ENCODE measurements at regions of chr17 and their contacts with region 1.

Region 1: GRCh38 chr17:62134397-62134796 is 69.3 kb upstream of the MED13 start:
- DNase-seq: no peak
- ATAC-seq: no peak
- H3K4me3 ChIP-seq: no peak overlapping the region
- H3K4me3 Mint-ChIP-seq: no peak overlapping the region
- H3K27ac ChIP-seq: no peak overlapping the region
- H3K27ac Mint-ChIP-seq: no peak overlapping the region
- H3K4me1 ChIP-seq: peaks cover 0 to 9% of the 10 kb centered on the region in 2 experiments
- H3K4me1 Mint-ChIP-seq: peaks cover 0 to 4% (median 2%) of the 10 kb centered on the region in 3 donors
- H3K27me3 ChIP-seq: peaks cover 0 to 24% of the 10 kb centered on the region in 2 experiments
- H3K27me3 Mint-ChIP-seq: peaks cover 14 to 27% of the 10 kb centered on the region in 2 donors

Region 2: DNA sequence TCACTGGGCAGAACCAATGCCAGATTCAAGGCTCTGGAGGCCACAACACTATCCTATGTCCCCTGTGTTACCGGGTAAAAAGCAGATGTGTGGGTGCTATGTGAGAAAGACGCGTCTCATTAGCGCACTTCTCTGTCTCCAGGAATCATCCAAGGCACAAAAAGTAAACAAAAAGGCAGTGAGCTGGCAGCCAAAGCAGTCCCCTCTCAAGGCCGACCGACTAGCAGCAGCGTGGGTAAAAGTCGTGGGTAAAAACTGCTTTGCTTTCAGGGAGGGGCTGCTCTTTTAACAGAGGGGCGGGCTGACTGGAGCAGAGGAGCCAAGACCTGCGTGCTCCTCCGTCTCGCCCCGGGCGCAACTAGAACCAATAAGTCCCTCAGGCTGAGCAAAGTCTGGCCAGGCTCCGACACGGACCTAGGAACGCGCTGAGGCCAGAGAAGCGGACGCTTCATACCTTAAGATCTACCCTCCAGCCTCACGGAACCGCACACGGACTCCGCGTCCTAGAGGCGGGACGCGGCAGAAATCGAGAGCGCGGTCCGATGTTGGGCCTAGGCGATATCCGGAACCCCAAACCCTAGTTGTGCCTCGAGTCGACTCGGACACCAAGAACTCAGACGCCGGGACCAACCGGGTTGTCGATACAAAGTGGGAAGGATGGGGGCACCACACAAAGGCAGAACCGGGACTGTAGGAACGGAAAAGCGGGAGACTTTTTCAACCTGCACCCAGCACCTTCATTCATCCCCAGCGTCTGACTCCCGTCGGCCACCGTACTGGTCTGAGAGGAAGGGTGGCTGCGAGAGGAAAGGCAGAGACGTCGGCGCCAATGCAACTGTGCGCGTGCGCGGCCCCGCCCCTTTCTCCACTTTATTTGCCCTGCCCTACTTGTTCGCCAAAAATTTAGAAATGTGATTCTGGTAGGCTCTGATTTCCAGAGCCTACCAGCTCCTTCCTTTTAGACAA is 206.9 kb before region 1 on chr17 and contains the start of gene INTS2:
- CTCF ChIA-PET with region 1: no interaction called
- POLR2A ChIA-PET with region 1: no interaction called
- DNase-seq: peak; percentile 90 to 97 (median 95)
- ATAC-seq: peak; percentile 89 to 92 (median 90)
- H3K4me3 ChIP-seq: peak within 1 kb of the TSS; percentile 80 to 81
- H3K4me3 Mint-ChIP-seq: peak within 1 kb of the TSS; percentile 87 to 92 (median 90)
- H3K27ac ChIP-seq: peak within 1 kb of the TSS; percentile 80
- H3K27ac Mint-ChIP-seq: peak within 1 kb of the TSS; percentile 95
- H3K4me1 ChIP-seq: peaks cover 10 to 16% of the 10 kb centered on the region in 2 experiments
- H3K4me1 Mint-ChIP-seq: peaks cover 21 to 22% (median 21%) of the 10 kb centered on the region in 3 donors
- H3K27me3 ChIP-seq: peaks cover 0 to 8% of the 10 kb centered on the region in 2 experiments
- H3K27me3 Mint-ChIP-seq: peaks cover 4% of the 10 kb centered on the region in 2 donors
- total RNA-seq, gene INTS2: 15.2 to 21.2 (median 16.9) TPM

Region 3: GRCh38 chr17:62150471-62150870 is 16.1 kb after region 1 on chr17:
- CTCF ChIA-PET with region 1: no interaction called
- POLR2A ChIA-PET with region 1: interaction called in 1 of 2 experiments, 14 read pairs
- DNase-seq: no peak
- ATAC-seq: no peak
- H3K4me3 ChIP-seq: no peak overlapping the region
- H3K4me3 Mint-ChIP-seq: no peak overlapping the region
- H3K27ac ChIP-seq: no peak overlapping the region
- H3K27ac Mint-ChIP-seq: no peak overlapping the region
- H3K4me1 ChIP-seq: no peaks in the 10 kb centered on the region
- H3K4me1 Mint-ChIP-seq: no peaks in the 10 kb centered on the region
- H3K27me3 ChIP-seq: peaks cover 0 to 6% of the 10 kb centered on the region in 2 experiments
- H3K27me3 Mint-ChIP-seq: peaks cover 4 to 7% of the 10 kb centered on the region in 2 donors

Measured in T-cell (primary cell).